ENCODE measurements at regions of chr1 and their contacts with region 1.

Region 1: GRCh38 chr1:29181413-29182225 is at the start of gene SRSF4:
- DNase-seq: peak; percentile 99
- CTCF ChIP-seq: peak; percentile 84

Region 2: DNA sequence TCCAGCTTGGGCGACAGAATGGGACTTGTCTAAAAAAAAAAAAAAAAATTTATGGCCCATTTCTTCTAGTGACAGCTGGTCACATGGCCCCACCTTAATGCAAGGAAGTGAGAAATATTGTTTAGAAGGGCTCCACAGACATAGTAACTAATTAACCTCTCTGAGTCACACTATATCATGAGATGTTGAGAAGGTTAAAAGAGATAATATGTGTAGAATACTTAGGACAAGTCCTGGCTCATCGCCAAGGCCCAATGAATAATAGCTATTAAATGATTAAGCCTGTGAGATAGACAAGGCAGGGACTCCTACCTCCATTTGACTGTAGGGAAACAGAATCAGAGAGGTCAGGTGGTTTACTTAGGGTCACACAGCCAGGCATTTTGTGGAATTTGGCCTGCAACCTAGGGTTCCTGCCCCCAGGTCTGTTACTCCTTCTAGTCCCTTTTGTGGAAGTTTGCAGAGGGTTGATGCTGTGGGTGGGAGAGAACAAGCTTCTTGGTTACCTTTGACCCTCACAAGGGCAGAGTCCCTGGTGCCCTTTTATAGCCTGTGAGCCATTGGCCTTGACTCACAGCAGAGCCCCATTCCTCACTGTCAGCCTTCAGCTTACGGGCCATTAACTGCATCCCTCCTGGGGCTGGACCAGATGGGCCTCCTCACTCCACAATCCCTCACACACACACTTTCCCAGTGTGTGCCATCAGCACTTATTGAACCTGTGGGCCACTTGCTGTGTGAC is 321.1 kb before region 1 on chr1:
- CTCF ChIA-PET with region 1: no interaction called
- POLR2A ChIA-PET with region 1: no interaction called
- DNase-seq: no peak
- CTCF ChIP-seq: no peak

Region 3: DNA sequence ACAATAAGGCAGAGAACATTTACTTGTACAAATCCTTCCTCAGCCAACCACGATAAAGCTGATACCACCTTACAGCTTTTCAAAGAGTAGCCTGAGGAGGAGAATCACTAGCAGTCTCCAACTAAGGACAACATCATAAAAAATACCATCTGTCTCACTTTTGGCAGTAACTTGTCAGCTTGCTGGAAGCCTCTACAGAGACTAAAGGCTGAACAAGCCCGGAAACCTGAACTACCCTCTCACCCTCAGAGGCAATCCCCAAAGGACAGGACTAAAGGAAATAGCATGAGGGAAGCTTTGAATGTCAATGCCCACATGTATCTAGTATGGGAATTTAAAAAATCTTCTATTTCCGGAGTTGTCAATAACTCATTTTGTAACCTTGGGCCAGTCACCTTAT is 10.5 kb before region 1 on chr1:
- CTCF ChIA-PET with region 1: interaction called, 23 read pairs
- POLR2A ChIA-PET with region 1: interaction called, 5 read pairs
- DNase-seq: no peak
- CTCF ChIP-seq: no peak

Region 4: DNA sequence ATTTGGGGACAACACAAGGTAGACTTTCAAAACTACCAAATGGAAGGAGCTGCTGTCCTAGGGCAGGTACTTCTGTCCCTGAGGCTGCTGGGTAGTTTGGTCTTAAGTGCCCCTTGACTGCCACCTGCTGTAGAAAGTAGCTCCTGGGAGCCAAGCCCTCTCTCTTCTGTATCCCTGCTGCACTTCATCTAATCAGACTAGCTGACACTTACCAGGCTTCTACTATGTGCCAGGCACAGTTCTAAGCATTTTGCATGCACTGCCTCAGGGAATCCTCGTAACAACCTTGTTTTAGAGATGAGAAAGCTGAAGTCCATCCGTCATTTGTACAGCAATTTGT is 15.9 kb after region 1 on chr1:
- CTCF ChIA-PET with region 1: interaction called, 132 read pairs
- POLR2A ChIA-PET with region 1: no interaction called
- DNase-seq: peak; percentile 37
- CTCF ChIP-seq: peak; percentile 38

Region 5: GRCh38 chr1:29202584-29203340 is 21.1 kb after region 1 on chr1:
- CTCF ChIA-PET with region 1: interaction called, 132 read pairs
- POLR2A ChIA-PET with region 1: no interaction called
- DNase-seq: peak; percentile 87
- CTCF ChIP-seq: peak; percentile 96

Region 6: DNA sequence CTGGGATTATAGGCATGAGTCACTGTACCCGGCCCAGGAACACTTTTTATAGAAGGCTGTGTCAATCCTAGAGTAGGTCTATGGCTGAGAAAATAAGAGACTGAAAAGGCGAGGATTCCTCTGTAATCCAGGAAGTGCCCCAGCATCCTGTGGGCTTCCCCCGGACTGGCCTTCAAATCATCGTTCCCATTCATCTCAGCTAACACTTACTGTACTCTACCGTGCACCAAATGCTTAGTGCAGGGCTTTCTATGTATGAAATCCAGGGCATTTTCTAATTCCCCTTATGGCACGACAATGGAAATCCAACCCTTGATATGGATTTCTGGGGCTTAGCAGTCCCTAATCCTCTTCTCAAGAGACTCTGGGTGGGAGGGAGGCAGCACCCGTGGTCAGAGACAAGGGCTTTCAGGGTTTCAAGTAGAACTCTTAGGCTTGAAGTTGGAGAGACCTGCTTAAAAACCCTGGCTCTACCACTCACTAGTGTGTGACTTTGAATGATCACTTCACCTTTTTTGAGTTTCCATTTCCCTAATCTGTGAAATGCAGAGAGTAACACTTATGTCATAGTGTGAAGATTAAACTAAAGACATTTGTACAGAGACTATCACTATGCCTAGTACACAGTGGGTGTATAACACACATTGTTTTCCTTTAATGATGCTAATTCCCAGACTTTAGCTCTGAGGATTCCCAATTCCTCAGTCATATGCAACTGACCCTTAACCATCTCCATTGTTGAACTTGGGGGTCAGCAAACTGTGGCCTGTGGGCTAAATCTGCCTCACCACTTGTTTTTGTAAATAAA is 28.9 kb after region 1 on chr1:
- CTCF ChIA-PET with region 1: interaction called, 10 read pairs
- POLR2A ChIA-PET with region 1: no interaction called
- DNase-seq: peak; percentile 79
- CTCF ChIP-seq: no peak

Measured in GM10248 (cell line).